ENCODE measurements at regions of chr16 and their contacts with region 1.

Region 1: DNA sequence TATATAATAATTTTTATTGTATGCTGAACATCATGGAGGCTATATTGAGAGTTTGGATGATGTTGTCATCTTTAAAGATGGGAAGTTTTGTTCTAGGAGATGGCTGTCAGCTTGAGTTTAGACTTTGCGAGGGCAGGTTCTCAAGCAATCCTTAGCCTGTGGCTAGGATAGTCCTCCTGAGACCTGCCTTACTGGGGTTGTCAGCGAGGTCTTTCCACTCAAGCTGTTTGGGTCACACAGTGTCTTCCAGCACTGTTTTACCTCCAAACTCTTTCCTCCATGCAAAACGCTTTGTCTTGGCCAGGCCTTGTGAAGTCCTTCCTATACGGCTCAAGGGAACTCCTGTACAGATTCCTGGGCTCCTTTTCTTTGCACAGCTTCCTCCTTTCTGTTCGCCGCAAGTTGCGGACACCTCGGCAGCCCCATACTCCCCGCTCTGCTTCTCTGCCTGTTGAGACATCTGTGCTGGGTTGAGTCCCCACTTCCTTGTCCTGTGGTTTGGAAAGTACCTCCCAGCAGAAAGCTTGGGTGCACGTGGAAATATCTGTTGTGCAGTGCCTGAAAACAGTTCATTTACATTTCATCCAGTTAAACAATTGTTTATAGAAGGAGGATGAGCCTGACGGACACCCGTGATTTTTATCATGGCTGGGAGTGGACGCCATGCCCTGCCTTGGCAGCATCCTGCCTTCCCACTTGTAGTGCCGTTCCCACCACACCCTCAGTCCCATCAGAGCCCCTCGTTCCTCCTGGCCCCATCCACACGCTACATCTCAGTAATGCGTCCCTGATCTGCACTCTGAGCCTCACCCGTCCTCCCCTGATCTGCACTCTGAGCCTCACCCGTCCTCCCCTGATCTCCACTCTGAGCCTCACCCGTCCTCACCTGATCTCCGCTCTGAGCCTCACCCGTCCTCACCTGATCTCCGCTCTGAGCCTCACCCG is 55.0 kb upstream of the CBFA2T3 start:
- DNase-seq: peak; percentile 76
- ATAC-seq: peak; percentile 94
- H3K4me3 Mint-ChIP-seq: peak overlapping the region; percentile 39
- H3K27ac Mint-ChIP-seq: peak overlapping the region; percentile 87
- H3K4me1 Mint-ChIP-seq: peaks cover 51% of the 10 kb centered on the region
- H3K27me3 Mint-ChIP-seq: peaks cover 3% of the 10 kb centered on the region

Region 2: GRCh38 chr16:88993166-88993761 is 38.7 kb before region 1 on chr16:
- CTCF ChIA-PET with region 1: no interaction called
- POLR2A ChIA-PET with region 1: no interaction called
- intact Hi-C with region 1: loop called in 1 of 2 experiments (anchors 5 kb)
- DNase-seq: no peak
- ATAC-seq: peak; percentile 33
- H3K4me3 Mint-ChIP-seq: no peak overlapping the region
- H3K27ac Mint-ChIP-seq: no peak overlapping the region
- H3K4me1 Mint-ChIP-seq: no peaks in the 10 kb centered on the region
- H3K27me3 Mint-ChIP-seq: no peaks in the 10 kb centered on the region

Region 3: DNA sequence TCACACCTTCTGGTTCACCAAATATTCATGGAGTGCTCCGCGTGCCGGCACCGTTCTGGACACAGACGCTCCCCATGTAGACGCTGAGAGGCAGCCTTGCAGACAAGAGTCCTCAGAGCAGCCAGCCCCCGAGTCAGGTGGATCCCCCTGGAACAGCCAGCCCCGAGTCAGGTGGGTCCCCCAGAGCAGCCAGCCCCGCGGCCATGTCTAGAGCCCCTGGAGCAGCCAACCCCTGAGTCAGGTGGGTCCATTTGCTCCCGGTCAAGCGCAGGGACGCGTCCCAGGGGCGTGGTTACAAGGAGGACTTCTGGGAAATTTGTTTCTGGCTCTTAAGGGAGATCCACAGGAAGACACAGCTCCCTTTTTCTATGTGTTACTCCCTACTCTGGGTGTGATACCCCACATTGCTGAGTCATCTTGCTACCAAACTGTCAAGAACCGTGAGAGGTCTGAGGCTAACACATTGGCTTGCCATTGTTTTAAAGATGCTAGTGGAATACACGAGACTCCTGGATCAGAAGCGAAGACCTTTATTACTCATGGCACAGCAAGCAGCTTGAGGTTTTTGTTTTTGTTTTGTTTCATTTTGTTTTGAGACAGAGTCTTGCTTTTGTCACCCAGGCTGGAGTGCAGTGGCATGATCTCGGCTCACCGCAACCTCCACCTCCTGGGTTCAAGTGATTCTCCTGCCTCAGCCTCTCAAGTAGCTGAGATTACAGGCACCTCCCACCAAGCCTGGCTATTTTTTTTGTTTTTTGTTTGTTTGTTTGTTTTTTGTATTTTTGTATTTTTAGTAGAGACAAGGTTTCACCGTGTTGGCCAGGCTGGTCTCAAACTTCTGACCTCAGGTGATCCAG is 11.7 kb before region 1 on chr16:
- CTCF ChIA-PET with region 1: interaction called, 5 read pairs
- POLR2A ChIA-PET with region 1: no interaction called
- intact Hi-C with region 1: loop called in 1 of 2 experiments (anchors 1 kb)
- DNase-seq: peak; percentile 60
- ATAC-seq: peak; percentile 98
- H3K4me3 Mint-ChIP-seq: no peak overlapping the region
- H3K27ac Mint-ChIP-seq: no peak overlapping the region
- H3K4me1 Mint-ChIP-seq: peaks cover 10% of the 10 kb centered on the region
- H3K27me3 Mint-ChIP-seq: peaks cover 3% of the 10 kb centered on the region

Region 4: DNA sequence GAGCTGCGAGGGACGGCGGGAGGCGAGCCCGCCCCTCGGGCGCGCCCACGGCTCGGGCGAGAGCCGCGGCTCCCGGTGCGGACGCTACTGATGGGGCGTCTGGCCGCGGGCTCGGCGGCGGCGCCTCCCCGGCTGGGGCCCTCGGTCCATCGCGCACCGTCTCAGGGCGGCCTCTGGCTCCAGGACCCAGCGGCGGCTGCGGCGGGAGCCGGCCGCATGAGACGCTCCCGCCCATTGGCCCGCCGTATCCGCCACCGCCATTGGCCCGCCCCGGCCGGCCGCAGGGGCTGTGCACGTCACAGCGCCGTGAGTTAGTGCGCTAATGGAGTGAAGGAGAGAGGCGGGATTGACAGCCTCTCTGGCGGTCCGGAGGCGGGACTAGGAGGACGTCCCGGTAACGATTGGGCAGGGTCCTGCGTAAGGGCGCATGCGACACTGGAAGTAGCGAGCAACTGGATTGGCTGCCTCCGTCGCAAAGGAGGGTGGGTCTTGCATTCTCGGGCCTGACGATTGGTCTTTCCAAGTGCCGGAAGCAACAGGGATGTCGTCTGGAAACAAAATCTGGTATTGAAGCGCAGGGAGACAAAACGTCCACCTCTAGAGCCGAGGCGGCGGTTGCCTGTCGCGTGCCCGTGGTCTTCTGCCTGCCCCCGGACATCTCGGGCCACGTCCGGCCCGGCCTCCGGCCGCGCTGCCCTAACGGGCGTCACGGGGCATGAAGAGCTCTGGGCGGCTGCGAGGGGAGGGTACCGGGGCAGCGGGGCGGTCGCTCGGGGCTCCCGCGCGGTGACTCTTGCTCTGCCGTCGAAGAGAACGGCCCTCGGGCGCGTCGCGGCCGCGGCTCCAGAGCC is 458.6 kb after region 1 on chr16 and contains the start of gene ANKRD11:
- CTCF ChIA-PET with region 1: no interaction called
- POLR2A ChIA-PET with region 1: no interaction called
- intact Hi-C with region 1: no loop called
- DNase-seq: peak; percentile 99
- ATAC-seq: peak; percentile 93
- H3K4me3 Mint-ChIP-seq: peak within 1 kb of the TSS; percentile 87
- H3K27ac Mint-ChIP-seq: peak within 1 kb of the TSS; percentile 92
- H3K4me1 Mint-ChIP-seq: peaks cover 44% of the 10 kb centered on the region
- H3K27me3 Mint-ChIP-seq: no peaks in the 10 kb centered on the region
- total RNA-seq, gene ANKRD11: 144 to 145 TPM